ENCODE measurements at regions of chr2 and their contacts with region 1.

Region 1: GRCh38 chr2:231662028-231662810 is 46.1 kb upstream of the PTMA start:
- DNase-seq: peak; percentile 96 to 99
- ATAC-seq: peak; percentile 72 to 83 (median 78)
- H3K4me3 ChIP-seq: peak overlapping the region in 9 of 10 donors; percentile 26 to 57 (median 51)
- H3K27ac ChIP-seq: peak overlapping the region; percentile 86 to 99 (median 96)
- H3K4me1 ChIP-seq: peaks cover 10 to 41% (median 24%) of the 10 kb centered on the region in 9 donors
- H3K27me3 ChIP-seq: no peaks in the 10 kb centered on the region
- CTCF ChIP-seq: peak in 3 of 9 donors; percentile 12 to 19 (median 15)

Region 2: DNA sequence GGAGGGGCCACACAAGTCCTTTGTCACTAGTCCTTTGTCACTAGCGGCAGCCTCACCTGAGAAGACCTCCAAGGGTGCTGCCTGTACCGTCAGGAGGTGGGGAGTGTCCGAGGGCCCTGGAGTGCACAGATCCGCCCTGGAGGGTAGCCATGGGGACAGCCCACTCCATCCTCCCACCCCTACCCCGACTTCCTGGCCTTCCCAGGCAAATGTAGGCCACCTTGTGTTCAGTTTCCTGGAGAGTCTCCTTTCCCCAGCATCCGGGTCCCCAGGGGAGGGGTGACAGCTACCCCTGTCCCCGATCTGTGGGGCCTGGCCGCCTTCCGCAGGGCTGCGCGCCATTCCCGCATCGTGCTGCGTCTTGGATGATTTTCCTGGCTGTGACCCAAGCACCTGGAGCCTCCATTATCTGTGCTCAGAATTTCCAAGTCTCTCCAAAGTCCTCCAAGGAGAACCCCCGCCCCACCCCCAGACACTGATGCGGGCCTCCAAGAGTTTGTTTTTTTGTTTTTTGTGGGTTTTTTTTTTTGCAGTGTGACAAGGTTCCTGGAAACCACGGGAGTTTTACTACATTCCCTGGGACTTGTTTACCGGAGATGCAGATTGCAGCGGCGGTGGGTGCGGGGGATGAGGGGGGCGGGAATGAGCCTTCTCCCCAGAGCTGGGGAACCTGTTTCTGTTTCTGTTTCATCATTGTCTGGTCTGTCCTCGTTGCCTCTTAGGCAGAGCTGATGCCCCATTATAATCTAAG is 40.9 kb before region 1 on chr2:
- intact Hi-C with region 1: no loop called
- DNase-seq: peak; percentile 48 to 80
- ATAC-seq: peak; percentile 53 to 87 (median 80)
- H3K4me3 ChIP-seq: peak overlapping the region in 8 of 10 donors; percentile 15 to 49 (median 26)
- H3K27ac ChIP-seq: peak overlapping the region; percentile 7 to 82 (median 74)
- H3K4me1 ChIP-seq: peaks cover 0 to 21% (median 11%) of the 10 kb centered on the region in 9 donors
- H3K27me3 ChIP-seq: no peaks in the 10 kb centered on the region
- CTCF ChIP-seq: no peak

Region 3: DNA sequence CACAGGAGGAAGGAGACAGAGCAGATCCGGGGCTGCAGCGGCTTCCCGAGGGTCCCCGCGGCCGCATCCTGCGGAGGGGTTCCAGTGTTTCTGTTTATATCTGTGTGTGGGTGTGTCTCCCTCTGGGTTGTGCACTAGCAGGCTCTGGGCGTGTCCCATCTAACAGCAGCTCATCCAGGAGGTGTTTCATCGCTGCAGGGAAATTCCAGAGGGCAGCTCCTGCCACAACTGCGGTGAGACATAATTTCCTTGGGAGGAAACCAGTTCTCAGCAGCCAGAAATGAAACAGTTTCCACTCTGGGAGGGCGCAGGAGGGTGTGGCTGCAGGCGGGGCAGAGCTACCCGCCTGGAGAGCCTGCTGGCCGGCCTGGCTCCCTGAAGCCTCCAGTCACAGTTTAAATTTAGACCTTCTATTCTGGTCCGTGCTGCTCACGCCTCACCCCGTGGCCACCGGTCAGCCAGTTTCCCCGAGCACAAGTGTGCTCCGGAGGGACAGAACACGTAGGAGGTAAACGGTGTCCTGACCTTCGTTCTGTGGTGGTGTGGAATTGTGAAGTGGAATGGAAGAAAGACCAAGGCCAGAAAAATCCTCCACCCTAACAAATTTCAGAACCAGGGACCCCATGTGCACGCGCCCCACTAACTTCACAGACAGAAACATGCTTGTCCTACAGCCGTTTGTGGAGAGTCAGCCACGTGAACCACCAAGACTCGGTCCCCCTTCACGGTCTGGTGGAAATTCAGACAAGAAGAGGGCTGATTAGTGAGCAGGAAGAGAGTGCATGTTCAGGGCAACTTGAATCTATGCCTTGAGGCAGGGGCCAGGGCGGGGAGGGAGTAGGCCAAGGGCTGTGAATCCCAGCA is 19.4 kb before region 1 on chr2:
- intact Hi-C with region 1: loop called in 5 of 10 experiments (anchors 1 to 2 kb)
- DNase-seq: peak; percentile 84 to 92
- ATAC-seq: peak; percentile 93 to 96 (median 94)
- H3K4me3 ChIP-seq: peak overlapping the region in 9 of 10 donors; percentile 5 to 45 (median 37)
- H3K27ac ChIP-seq: peak overlapping the region; percentile 84 to 98 (median 96)
- H3K4me1 ChIP-seq: peaks cover 35 to 72% (median 60%) of the 10 kb centered on the region in 9 donors
- H3K27me3 ChIP-seq: no peaks in the 10 kb centered on the region
- CTCF ChIP-seq: peak in 1 of 9 donors; percentile 4

Region 4: GRCh38 chr2:231648587-231649174 is 13.5 kb before region 1 on chr2:
- intact Hi-C with region 1: loop called in 5 of 10 experiments (anchors 1 to 2 kb)
- DNase-seq: peak; percentile 68 to 79
- ATAC-seq: peak; percentile 63 to 84 (median 78)
- H3K4me3 ChIP-seq: no peak overlapping the region
- H3K27ac ChIP-seq: no peak overlapping the region
- H3K4me1 ChIP-seq: peaks cover 13 to 36% (median 27%) of the 10 kb centered on the region in 9 donors
- H3K27me3 ChIP-seq: no peaks in the 10 kb centered on the region
- CTCF ChIP-seq: peak; percentile 45 to 81 (median 69)